Heart right ventricle (tissue), 16 donors: ENCODE measurements at regions of chr22 and their contacts with region 1.

Region 1: GRCh38 chr22:38104084-38104483 is 6.4 kb downstream of the BAIAP2L2 start:
- DNase-seq: no peak
- ATAC-seq: peak in 1 of 8 donors; percentile 44
- H3K4me3 ChIP-seq: no peak overlapping the region
- H3K27ac ChIP-seq: no peak overlapping the region
- H3K4me1 ChIP-seq: peaks cover 0 to 11% (median 0%) of the 10 kb centered on the region in 9 donors
- H3K27me3 ChIP-seq: no peaks in the 10 kb centered on the region
- CTCF ChIP-seq: peak in 7 of 9 donors; percentile 22 to 40 (median 31)

Region 2: GRCh38 chr22:38051900-38052862 is 51.9 kb before region 1 on chr22:
- intact Hi-C with region 1: loop called in 3 of 10 experiments (anchors 5 to 10 kb)
- DNase-seq: peak; percentile 71 to 78
- ATAC-seq: peak; percentile 67 to 82 (median 75)
- H3K4me3 ChIP-seq: peak overlapping the region in 1 of 10 donors; percentile 9
- H3K27ac ChIP-seq: no peak overlapping the region
- H3K4me1 ChIP-seq: peaks cover 0 to 15% (median 11%) of the 10 kb centered on the region in 9 donors
- H3K27me3 ChIP-seq: peaks cover 0 to 6% (median 0%) of the 10 kb centered on the region in 7 donors
- CTCF ChIP-seq: peak; percentile 75 to 95 (median 91)

Region 3: DNA sequence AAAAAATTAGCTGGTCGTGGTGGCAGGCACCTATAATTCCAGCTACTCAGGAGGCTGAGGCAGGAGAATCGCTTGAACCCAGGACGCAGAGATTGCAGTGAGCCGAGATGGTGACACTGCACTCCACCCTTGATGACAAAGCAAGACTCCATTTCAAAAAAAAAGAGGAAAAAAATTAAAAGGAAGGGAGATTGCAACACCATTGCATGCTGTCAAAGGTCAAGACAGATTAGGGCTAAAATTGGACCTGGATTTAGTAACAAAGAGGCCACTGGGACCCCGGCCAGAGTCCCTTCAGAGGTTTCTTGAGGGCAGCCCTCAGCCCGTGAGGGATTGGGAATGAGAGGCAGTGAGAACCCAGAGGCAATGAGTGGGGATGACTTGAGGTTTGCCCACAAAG is 89.5 kb after region 1 on chr22:
- intact Hi-C with region 1: no loop called
- DNase-seq: peak in 1 of 2 donors; percentile 61
- ATAC-seq: peak in 7 of 8 donors; percentile 42 to 61 (median 56)
- H3K4me3 ChIP-seq: no peak overlapping the region
- H3K27ac ChIP-seq: peak overlapping the region in 2 of 10 donors; percentile 5 to 56
- H3K4me1 ChIP-seq: peaks cover 0 to 21% (median 5%) of the 10 kb centered on the region in 9 donors
- H3K27me3 ChIP-seq: no peaks in the 10 kb centered on the region
- CTCF ChIP-seq: no peak